Heart right ventricle (tissue), 16 donors: ENCODE measurements at regions of chr15 and their contacts with region 1.

Region 1: GRCh38 chr15:58749532-58750337 is at the start of gene ADAM10:
- DNase-seq: peak; percentile 98 to 100
- ATAC-seq: peak; percentile 98 to 100 (median 98)
- H3K4me3 ChIP-seq: peak within 1 kb of the TSS; percentile 70 to 97 (median 94)
- H3K27ac ChIP-seq: peak within 1 kb of the TSS; percentile 96 to 99 (median 98)
- H3K4me1 ChIP-seq: peaks cover 0 to 42% (median 37%) of the 10 kb centered on the region in 9 donors
- H3K27me3 ChIP-seq: no peaks in the 10 kb centered on the region
- CTCF ChIP-seq: peak in 1 of 9 donors; percentile 20
- total RNA-seq, gene ADAM10: 68.3 to 110 (median 81.0) TPM

Region 2: GRCh38 chr15:58227706-58228543 is 521.8 kb before region 1 on chr15:
- intact Hi-C with region 1: loop called in 4 of 10 experiments (anchors 10 kb)
- DNase-seq: peak; percentile 71 to 74
- ATAC-seq: peak in 7 of 8 donors; percentile 49 to 86 (median 72)
- H3K4me3 ChIP-seq: no peak overlapping the region
- H3K27ac ChIP-seq: peak overlapping the region in 9 of 10 donors; percentile 18 to 78 (median 68)
- H3K4me1 ChIP-seq: peaks cover 6 to 45% (median 35%) of the 10 kb centered on the region in 9 donors
- H3K27me3 ChIP-seq: no peaks in the 10 kb centered on the region
- CTCF ChIP-seq: peak; percentile 66 to 90 (median 85)

Region 3: GRCh38 chr15:58331903-58332675 is 417.6 kb before region 1 on chr15:
- intact Hi-C with region 1: loop called in 1 of 10 experiments (anchors 10 kb)
- DNase-seq: peak; percentile 90 to 96
- ATAC-seq: peak; percentile 96 to 98 (median 98)
- H3K4me3 ChIP-seq: peak overlapping the region in 3 of 10 donors; percentile 1 to 8 (median 1)
- H3K27ac ChIP-seq: peak overlapping the region; percentile 79 to 95 (median 88)
- H3K4me1 ChIP-seq: peaks cover 18 to 47% (median 38%) of the 10 kb centered on the region in 9 donors
- H3K27me3 ChIP-seq: no peaks in the 10 kb centered on the region
- CTCF ChIP-seq: no peak

Region 4: GRCh38 chr15:58632789-58633188 is 116.9 kb before region 1 on chr15:
- intact Hi-C with region 1: loop called in 1 of 10 experiments (anchors 5 kb)
- DNase-seq: no peak
- ATAC-seq: no peak
- H3K4me3 ChIP-seq: no peak overlapping the region
- H3K27ac ChIP-seq: no peak overlapping the region
- H3K4me1 ChIP-seq: peaks cover 0 to 24% (median 18%) of the 10 kb centered on the region in 9 donors
- H3K27me3 ChIP-seq: no peaks in the 10 kb centered on the region
- CTCF ChIP-seq: no peak

Region 5: GRCh38 chr15:58690703-58691102 is 59.0 kb before region 1 on chr15:
- intact Hi-C with region 1: loop called in 1 of 10 experiments (anchors 10 kb)
- DNase-seq: no peak
- ATAC-seq: peak in 1 of 8 donors; percentile 22
- H3K4me3 ChIP-seq: no peak overlapping the region
- H3K27ac ChIP-seq: no peak overlapping the region
- H3K4me1 ChIP-seq: peaks cover 0 to 42% (median 25%) of the 10 kb centered on the region in 9 donors
- H3K27me3 ChIP-seq: no peaks in the 10 kb centered on the region
- CTCF ChIP-seq: no peak